ENCODE measurements at regions of chr14 and their contacts with region 1.

Region 1: DNA sequence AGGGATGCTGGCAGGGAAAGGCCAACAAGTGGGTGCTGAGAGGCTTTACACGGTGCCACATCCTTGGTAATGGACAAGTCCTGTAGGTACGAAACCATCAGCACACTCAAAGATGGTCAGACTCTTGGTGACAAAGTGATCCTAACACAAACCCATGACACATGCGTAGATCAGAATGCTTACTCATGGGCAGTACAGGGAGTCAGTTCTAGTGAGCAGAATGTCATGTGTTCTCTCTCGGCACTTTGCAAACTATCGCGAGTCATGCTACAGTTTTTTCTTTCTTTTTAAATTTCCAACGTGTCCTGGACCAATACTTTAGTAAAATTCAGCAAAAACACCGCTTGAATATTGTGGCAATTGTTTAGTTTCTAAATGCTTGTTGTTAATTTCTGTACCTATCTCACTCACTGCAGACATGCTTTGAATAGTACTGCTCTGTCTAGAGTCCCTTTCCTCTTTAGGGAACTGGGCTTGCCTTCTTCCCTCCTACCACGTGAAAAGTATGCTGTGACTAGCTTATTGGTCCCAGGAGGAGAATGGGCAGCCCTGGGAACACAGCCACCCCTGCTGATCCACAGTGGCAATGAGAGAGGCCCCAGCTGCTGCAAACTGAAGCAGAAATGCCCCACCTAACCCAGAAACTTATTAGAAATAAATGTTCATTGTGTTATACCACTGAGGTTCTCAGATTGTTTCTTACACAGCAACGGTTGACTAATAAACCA is 62.4 kb downstream of the UBR7 start:
- DNase-seq: no peak
- H3K4me3 ChIP-seq: no peak overlapping the region
- H3K27ac ChIP-seq: no peak overlapping the region
- H3K4me1 ChIP-seq: no peaks in the 10 kb centered on the region
- H3K27me3 ChIP-seq: no peaks in the 10 kb centered on the region
- CTCF ChIP-seq: no peak
- POLR2A ChIP-seq: no peak

Region 2: GRCh38 chr14:93323600-93324174 is 54.2 kb after region 1 on chr14:
- intact Hi-C with region 1: loop called (anchors 2 kb)
- DNase-seq: no peak
- H3K4me3 ChIP-seq: no peak overlapping the region
- H3K27ac ChIP-seq: no peak overlapping the region
- H3K4me1 ChIP-seq: no peaks in the 10 kb centered on the region
- H3K27me3 ChIP-seq: no peaks in the 10 kb centered on the region
- CTCF ChIP-seq: no peak
- POLR2A ChIP-seq: no peak

Region 3: DNA sequence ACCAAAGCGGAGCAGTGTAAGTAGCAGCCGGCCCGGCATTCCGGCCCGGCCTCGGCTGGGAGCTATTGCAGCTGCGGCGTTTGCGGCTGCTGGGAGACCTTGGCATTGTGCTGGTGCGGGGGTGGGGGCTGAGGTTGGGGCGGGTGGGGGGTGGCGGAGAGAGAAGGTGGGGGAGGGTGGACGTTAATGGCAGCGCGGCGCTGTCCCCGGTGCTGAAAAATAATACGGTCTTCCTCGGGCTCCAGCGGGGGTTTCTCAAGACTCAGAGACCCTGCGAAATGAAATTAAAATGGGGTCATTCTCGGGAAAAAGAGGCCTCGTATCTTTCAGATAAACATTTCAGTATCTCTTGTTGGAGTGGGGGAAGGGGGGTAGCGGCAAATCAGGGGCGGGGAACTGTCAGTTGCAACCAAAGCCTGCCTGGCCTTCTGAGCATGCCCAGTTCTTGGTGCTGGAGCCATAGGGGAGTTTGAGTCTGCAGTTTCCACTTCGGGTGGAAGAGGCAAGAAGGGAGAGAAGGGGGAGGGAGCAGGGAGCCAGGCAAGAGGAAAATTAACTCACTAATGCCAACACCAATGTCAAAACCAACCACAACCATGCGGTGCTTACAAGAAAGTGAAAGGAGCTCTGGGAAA is 161.6 kb after region 1 on chr14:
- intact Hi-C with region 1: no loop called
- DNase-seq: no peak
- H3K4me3 ChIP-seq: peak overlapping the region in 2 of 3 donors; percentile 37 to 48
- H3K27ac ChIP-seq: no peak overlapping the region
- H3K4me1 ChIP-seq: peaks cover 0 to 5% of the 10 kb centered on the region in 2 donors
- H3K27me3 ChIP-seq: peaks cover 0 to 37% of the 10 kb centered on the region in 2 donors
- CTCF ChIP-seq: no peak
- POLR2A ChIP-seq: no peak

Region 4: GRCh38 chr14:94227029-94227428 is 957.5 kb after region 1 on chr14:
- intact Hi-C with region 1: no loop called
- DNase-seq: no peak
- H3K4me3 ChIP-seq: no peak overlapping the region
- H3K27ac ChIP-seq: no peak overlapping the region
- H3K4me1 ChIP-seq: no peaks in the 10 kb centered on the region
- H3K27me3 ChIP-seq: no peaks in the 10 kb centered on the region
- CTCF ChIP-seq: no peak
- POLR2A ChIP-seq: no peak

Measured in breast epithelium (tissue), 4 donors.